Motor neuron (in vitro differentiated cells): ENCODE measurements at regions of chr1 and their contacts with region 1.

Region 1: GRCh38 chr1:56578963-56579875 is at the start of gene PLPP3:
- ATAC-seq: peak; percentile 64 to 86 (median 71)
- H3K4me3 ChIP-seq: peak within 1 kb of the TSS; percentile 53 to 90 (median 76)
- H3K27ac ChIP-seq: peak within 1 kb of the TSS; percentile 1 to 76
- H3K4me1 ChIP-seq: peaks cover 14 to 32% of the 10 kb centered on the region in 2 donors
- total RNA-seq, gene PLPP3: 4.7 to 175 (median 24.7) TPM

Region 2: GRCh38 chr1:54944610-54945544 is 1634.3 kb before region 1 on chr1:
- in situ Hi-C with region 1: loop called in 1 of 9 experiments (anchors 25 kb)
- ATAC-seq: peak; percentile 43 to 96 (median 74)
- H3K4me3 ChIP-seq: no peak overlapping the region
- H3K27ac ChIP-seq: no peak overlapping the region
- H3K4me1 ChIP-seq: no peaks in the 10 kb centered on the region

Region 3: DNA sequence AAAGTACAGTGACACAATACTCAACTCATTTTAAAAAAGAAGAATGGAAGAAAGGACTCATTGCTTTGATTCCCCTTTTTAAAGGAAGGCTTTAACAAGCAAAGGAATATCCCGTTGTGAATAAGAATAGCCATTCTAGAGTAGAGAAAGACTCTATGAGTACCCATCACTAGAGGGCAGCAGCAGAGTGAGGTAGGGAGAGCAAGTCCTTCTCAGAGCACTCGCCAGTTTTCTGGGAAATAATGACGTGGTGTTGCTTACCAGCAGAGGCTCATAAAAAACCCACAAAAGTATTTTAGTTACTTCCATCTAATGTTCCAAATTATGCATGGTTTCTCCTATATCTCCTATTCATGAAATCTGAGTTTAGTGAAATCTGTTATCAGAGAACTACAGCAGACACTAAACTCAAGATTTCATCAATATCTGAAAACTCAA is 1438.7 kb before region 1 on chr1:
- in situ Hi-C with region 1: loop called in 1 of 9 experiments (anchors 25 kb)
- ATAC-seq: peak; percentile 78 to 100 (median 90)
- H3K4me3 ChIP-seq: no peak overlapping the region
- H3K27ac ChIP-seq: no peak overlapping the region
- H3K4me1 ChIP-seq: no peaks in the 10 kb centered on the region

Region 4: DNA sequence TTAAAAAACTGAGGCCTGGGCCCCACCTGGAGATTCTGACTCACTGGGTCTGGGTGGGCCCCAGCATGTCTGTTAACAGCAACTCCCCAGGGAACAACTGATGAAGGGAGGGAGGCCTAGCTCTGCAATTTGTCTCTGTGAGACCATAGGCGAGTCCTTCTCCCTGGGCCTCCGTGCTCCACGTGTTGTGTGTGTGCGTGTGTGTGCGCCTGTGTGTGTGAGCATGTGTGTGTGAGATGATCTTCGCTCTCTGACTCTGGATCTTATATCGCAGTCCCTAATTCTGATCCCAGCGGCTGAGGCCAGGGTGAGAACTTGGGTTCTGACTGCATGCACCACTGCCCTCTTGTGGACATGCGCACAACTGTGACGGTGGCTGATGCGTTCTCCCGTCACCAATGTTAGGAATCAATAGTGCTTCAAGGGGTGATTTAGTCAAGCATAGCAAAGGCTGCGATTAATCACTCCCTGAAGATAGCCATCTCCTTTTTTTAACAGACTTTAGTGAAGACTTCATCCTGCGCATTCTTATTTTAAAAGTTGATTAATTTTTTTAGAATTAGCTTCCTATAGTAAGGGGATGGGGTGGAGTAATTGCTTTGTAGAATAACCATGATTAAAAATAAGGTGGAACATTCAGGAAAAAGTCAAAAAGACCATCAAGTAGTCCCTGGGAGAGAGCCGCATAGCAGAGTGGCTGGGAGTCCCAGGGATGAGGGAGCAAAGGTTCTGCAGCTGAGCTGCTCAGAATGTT is 1301.7 kb before region 1 on chr1:
- in situ Hi-C with region 1: loop called in 7 of 9 experiments (anchors 10 to 25 kb)
- ATAC-seq: peak; percentile 81 to 99 (median 98)
- H3K4me3 ChIP-seq: no peak overlapping the region
- H3K27ac ChIP-seq: no peak overlapping the region
- H3K4me1 ChIP-seq: peaks cover 0 to 4% of the 10 kb centered on the region in 2 donors

Region 5: GRCh38 chr1:55375617-55376258 is 1203.5 kb before region 1 on chr1:
- in situ Hi-C with region 1: loop called in 2 of 9 experiments (anchors 25 kb)
- ATAC-seq: peak in 5 of 8 experiments; percentile 21 to 73 (median 41)
- H3K4me3 ChIP-seq: no peak overlapping the region
- H3K27ac ChIP-seq: no peak overlapping the region
- H3K4me1 ChIP-seq: no peaks in the 10 kb centered on the region

Region 6: DNA sequence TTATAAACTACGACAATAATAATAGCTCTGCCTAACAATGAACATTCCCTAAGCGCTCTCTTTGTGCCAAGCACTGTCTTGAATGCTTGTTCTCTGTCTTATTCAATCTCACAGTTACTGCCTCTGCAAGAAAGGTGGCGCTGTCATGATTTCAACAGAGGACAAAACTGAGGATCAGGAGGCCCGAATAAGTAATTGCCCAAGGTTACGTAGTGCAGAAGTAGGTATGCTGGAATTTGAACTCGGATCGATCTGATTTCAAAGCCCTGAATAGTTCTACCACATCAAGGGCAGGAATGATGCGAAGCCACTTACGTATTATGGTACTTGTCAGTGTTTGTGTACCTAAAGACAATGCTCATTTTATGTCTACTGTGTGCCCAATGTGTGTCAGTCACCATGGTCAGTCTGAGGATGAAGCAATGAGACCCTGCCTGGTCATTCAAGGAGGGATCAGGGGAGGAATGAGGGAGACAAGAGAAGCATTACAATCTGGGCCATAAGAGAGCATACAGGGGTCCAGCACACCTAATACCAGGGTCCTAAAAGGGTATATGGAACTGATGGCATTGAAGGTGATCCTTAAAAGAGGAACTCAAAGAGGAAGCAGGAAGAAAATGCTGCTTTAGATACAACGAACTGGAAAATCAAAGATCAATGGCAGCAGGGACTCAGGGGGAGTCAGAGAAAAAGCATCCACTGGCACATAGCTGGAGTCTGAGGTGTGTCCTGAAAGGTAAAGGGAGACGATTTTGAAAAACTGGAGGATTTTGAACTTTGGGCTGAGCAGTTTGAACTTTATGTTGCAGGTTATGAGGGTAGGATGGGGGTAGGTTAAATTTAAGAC is 389.1 kb before region 1 on chr1:
- in situ Hi-C with region 1: loop called in 1 of 9 experiments (anchors 25 kb)
- ATAC-seq: peak in 3 of 8 experiments; percentile 19 to 76 (median 49)
- H3K4me3 ChIP-seq: no peak overlapping the region
- H3K27ac ChIP-seq: no peak overlapping the region
- H3K4me1 ChIP-seq: peaks cover 15 to 23% of the 10 kb centered on the region in 2 donors

Region 7: GRCh38 chr1:56355422-56355821 is 223.8 kb before region 1 on chr1:
- in situ Hi-C with region 1: no loop called
- ATAC-seq: no peak
- H3K4me3 ChIP-seq: no peak overlapping the region
- H3K27ac ChIP-seq: no peak overlapping the region
- H3K4me1 ChIP-seq: peaks cover 21 to 22% of the 10 kb centered on the region in 2 donors

Region 8: GRCh38 chr1:56821140-56821797 is 242.1 kb after region 1 on chr1:
- in situ Hi-C with region 1: loop called in 1 of 9 experiments (anchors 25 kb)
- ATAC-seq: peak; percentile 22 to 99 (median 52)
- H3K4me3 ChIP-seq: no peak overlapping the region
- H3K27ac ChIP-seq: no peak overlapping the region
- H3K4me1 ChIP-seq: peaks cover 10 to 22% of the 10 kb centered on the region in 2 donors